ENCODE measurements at regions of chr9 and their contacts with region 1.

Region 1: GRCh38 chr9:130866474-130866965 is 30.1 kb downstream of the QRFP start:
- DNase-seq: no peak
- H3K4me3 ChIP-seq: no peak overlapping the region
- H3K27me3 ChIP-seq: no peaks in the 10 kb centered on the region
- CTCF ChIP-seq: peak; percentile 90

Region 2: DNA sequence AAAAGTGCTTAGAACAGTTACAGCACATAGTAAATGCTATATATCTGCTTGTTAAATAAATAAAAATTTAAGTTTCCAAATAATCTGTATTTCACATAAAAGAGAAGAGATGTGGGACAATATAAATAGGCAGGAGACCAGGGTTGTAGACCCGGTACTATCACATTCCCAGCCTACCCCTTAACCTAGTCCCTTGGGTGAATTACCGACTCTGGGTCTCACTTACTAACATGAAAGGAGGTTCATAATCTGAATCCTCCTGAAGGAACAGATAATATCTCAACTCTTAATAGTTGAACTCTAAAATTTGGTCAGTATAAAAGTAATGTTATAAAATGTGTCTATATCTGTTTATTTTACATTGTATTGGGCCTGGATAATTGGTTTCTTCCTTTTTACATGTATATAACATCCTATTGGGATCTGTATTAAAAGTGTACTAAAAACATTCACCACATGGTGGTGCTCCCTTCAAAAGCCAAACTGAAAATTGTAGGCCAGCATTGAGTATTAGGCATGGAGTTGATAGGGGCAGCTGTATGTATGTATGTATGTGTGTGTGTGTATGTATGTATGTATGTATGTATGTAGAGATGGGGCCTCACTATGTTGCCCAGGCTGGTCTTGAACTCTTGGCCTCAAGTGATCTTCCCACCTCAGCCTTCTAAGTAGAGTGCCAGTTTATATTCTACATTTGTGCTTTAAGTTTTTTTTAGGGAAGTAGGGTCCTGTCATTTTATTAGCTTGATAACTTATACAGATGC is 95.7 kb before region 1 on chr9:
- CTCF ChIA-PET with region 1: interaction called, 103 read pairs
- POLR2A ChIA-PET with region 1: no interaction called
- DNase-seq: no peak
- H3K4me3 ChIP-seq: no peak overlapping the region
- H3K27me3 ChIP-seq: no peaks in the 10 kb centered on the region
- CTCF ChIP-seq: peak; percentile 62

Region 3: DNA sequence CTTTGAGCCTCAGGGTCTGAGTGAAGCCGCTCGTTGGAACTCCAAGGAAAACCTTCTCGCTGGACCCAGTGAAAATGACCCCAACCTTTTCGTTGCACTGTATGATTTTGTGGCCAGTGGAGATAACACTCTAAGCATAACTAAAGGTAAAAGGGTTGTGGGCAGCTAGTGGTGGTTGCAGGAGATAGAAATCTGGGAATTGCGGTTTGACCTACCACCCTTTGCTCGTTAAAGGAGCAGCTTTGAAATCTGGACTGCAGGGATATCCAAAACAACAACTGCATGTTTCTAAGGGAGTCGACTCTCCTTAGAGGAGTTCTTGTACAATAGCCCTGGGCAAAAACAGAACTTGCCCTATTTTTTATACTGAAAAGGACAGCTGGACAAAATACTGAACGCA is 12.4 kb before region 1 on chr9:
- CTCF ChIA-PET with region 1: interaction called, 22 read pairs
- POLR2A ChIA-PET with region 1: no interaction called
- DNase-seq: peak; percentile 62
- H3K4me3 ChIP-seq: no peak overlapping the region
- H3K27me3 ChIP-seq: no peaks in the 10 kb centered on the region
- CTCF ChIP-seq: no peak

Region 4: GRCh38 chr9:130936298-130937117 is 70.0 kb after region 1 on chr9:
- CTCF ChIA-PET with region 1: interaction called, 23 read pairs
- POLR2A ChIA-PET with region 1: no interaction called
- DNase-seq: peak; percentile 32
- H3K4me3 ChIP-seq: no peak overlapping the region
- H3K27me3 ChIP-seq: peaks cover 3% of the 10 kb centered on the region
- CTCF ChIP-seq: no peak

Region 5: GRCh38 chr9:131046581-131047202 is 180.2 kb after region 1 on chr9:
- CTCF ChIA-PET with region 1: interaction called, 27 read pairs
- POLR2A ChIA-PET with region 1: no interaction called
- DNase-seq: no peak
- H3K4me3 ChIP-seq: no peak overlapping the region
- H3K27me3 ChIP-seq: no peaks in the 10 kb centered on the region; the same call in 1 of the 2 replicates
- CTCF ChIP-seq: peak; percentile 99